CD8-positive, alpha-beta memory T cell (primary cell): ENCODE measurements at regions of chr12 and their contacts with region 1.

Region 1: DNA sequence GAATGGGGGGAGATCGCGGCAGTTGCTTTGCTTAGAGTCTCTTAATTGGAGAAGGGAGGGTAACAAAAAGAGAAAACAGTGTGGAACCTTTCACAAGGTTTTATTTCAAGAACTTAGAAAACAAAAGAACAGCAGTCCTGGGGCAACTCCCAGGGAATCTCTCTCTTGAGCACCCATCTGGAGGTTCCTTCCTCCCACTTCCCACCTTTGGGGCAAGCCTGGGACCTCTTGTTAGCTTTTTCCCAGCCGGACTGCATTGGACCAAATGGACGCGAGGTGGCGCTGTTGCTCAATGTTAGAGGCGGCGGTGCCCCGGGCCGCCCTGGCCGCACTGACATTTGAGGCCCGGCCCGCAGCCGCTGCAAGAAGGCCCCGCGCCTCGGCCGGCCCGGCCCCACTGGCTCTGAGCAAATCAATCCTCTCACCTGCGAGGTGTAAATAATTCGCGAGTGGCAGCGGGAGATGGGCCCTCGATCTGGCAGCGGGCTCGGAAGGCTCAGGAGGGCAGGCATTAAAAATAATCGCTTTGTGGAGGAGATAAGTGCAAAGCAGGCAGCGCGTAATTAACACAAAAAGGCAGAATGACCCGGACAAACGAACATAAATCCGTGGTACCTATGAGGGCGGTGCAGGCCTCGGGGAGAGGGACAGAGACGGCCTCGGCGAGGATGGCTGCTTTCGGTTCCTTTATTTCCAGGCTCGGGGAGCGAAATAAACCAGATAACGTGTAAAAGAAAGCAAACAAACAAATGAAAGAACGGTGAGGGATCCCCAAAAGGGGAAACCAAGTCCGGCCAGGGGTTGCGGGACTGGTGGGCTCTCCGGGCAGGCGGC is 2.7 kb upstream of the HOXC8 start:
- DNase-seq: peak; percentile 75 to 87 (median 82)
- H3K4me3 ChIP-seq: peak overlapping the region; percentile 51
- H3K4me3 Mint-ChIP-seq: peak overlapping the region; percentile 66 to 93 (median 77)
- H3K27ac ChIP-seq: no peak overlapping the region
- H3K27ac Mint-ChIP-seq: peak overlapping the region in 5 of 8 donors; percentile 14 to 73 (median 68)
- H3K4me1 ChIP-seq: peaks cover 19% of the 10 kb centered on the region
- H3K4me1 Mint-ChIP-seq: peaks cover 20 to 46% (median 20%) of the 10 kb centered on the region in 3 donors
- H3K27me3 ChIP-seq: peaks cover 83% of the 10 kb centered on the region
- H3K27me3 Mint-ChIP-seq: peaks cover 78 to 99% of the 10 kb centered on the region in 2 donors

Region 2: GRCh38 chr12:53928054-53928835 is 77.8 kb before region 1 on chr12:
- CTCF ChIA-PET with region 1: no interaction called
- POLR2A ChIA-PET with region 1: no interaction called
- DNase-seq: no peak
- H3K4me3 ChIP-seq: no peak overlapping the region
- H3K4me3 Mint-ChIP-seq: no peak overlapping the region
- H3K27ac ChIP-seq: no peak overlapping the region
- H3K27ac Mint-ChIP-seq: no peak overlapping the region
- H3K4me1 ChIP-seq: no peaks in the 10 kb centered on the region
- H3K4me1 Mint-ChIP-seq: no peaks in the 10 kb centered on the region
- H3K27me3 ChIP-seq: peaks cover 77% of the 10 kb centered on the region
- H3K27me3 Mint-ChIP-seq: peaks cover 84 to 92% of the 10 kb centered on the region in 2 donors

Region 3: GRCh38 chr12:54017878-54018467 is 11.9 kb after region 1 on chr12:
- CTCF ChIA-PET with region 1: interaction called, 24 read pairs
- POLR2A ChIA-PET with region 1: interaction called, 5 read pairs
- DNase-seq: peak; percentile 62 to 88 (median 73)
- H3K4me3 ChIP-seq: peak overlapping the region; percentile 86
- H3K4me3 Mint-ChIP-seq: peak overlapping the region; percentile 86 to 95 (median 91)
- H3K27ac ChIP-seq: peak overlapping the region; percentile 72
- H3K27ac Mint-ChIP-seq: peak overlapping the region in 7 of 8 donors; percentile 26 to 96 (median 70)
- H3K4me1 ChIP-seq: peaks cover 11% of the 10 kb centered on the region
- H3K4me1 Mint-ChIP-seq: peaks cover 15 to 34% (median 18%) of the 10 kb centered on the region in 3 donors
- H3K27me3 ChIP-seq: peaks cover 60% of the 10 kb centered on the region
- H3K27me3 Mint-ChIP-seq: peaks cover 63 to 76% of the 10 kb centered on the region in 2 donors

Region 4: DNA sequence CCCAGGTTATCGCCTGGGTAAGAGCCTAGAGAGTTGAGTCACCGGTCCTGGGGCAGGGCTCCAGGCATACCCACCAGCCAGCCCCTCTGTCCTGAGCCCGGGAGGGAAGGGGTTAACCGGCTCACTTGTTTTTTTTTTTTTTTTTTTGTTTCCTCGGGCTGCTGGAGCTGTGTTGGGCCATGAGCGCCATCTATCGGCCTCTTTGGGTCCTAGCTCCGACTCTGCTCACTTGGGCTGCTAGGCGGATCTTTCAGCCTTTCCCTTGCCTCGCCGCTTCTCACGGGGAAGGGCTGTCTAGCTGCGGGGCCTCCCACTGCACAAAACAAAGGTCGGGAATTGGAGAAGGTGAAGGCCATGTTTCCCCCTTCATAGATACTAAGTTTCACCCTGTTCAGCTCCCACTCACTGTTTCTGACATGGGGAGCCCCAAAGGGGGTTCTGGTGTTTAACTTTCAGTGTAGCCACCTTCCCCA is 185.5 kb after region 1 on chr12:
- CTCF ChIA-PET with region 1: interaction called, 95 read pairs
- POLR2A ChIA-PET with region 1: interaction called, 3 read pairs
- DNase-seq: peak; percentile 66 to 83 (median 74)
- H3K4me3 ChIP-seq: no peak overlapping the region
- H3K4me3 Mint-ChIP-seq: peak overlapping the region in 1 of 7 donors; percentile 72
- H3K27ac ChIP-seq: no peak overlapping the region
- H3K27ac Mint-ChIP-seq: peak overlapping the region in 2 of 8 donors; percentile 29 to 78
- H3K4me1 ChIP-seq: peaks cover 17% of the 10 kb centered on the region
- H3K4me1 Mint-ChIP-seq: peaks cover 23 to 34% (median 31%) of the 10 kb centered on the region in 3 donors
- H3K27me3 ChIP-seq: peaks cover 20% of the 10 kb centered on the region
- H3K27me3 Mint-ChIP-seq: peaks cover 36 to 50% of the 10 kb centered on the region in 2 donors

Region 5: DNA sequence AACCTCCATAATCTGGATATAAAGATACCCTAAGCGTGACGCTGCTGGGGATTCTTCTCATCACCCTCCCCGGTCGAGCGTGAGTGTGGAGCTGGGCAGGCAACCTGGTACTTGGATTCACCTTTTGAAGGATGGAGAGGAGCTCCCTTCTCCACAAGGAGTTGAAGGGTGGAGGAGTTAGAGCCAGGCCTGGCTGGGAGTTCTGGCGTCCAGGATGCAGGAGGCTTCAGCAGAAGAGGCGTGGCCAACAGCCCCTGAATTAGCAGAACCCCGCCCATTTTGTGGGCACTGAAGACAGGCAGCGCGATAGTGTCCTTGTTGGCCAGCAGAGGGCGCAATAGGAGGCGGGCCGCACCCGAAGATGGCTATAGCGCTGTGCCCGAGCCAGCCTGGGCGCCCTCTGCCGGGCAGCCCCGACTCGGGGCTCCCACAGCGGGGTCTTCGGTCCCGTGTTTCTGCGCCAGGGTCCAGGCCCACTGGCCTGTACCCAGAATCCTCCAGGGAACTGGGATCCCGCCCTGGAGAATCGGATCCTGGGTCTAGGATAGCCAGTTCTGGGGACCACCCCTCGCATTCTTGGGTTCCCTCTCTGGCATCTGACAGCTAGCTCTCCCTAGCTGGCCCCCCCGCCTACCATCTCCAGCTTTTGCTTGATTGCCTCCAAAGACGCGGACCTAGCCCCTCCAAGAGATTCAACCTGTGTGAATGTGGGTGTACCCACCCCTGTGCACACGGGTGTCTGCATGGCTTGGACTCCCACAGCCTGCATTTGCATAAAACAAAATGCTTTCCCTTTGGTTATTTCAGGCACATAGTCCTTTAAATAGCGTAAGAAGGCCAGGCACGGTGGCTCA is 208.7 kb after region 1 on chr12:
- CTCF ChIA-PET with region 1: interaction called, 216 read pairs
- POLR2A ChIA-PET with region 1: no interaction called
- DNase-seq: peak; percentile 88 to 91 (median 89)
- H3K4me3 ChIP-seq: peak overlapping the region; percentile 56
- H3K4me3 Mint-ChIP-seq: peak overlapping the region; percentile 75 to 91 (median 78)
- H3K27ac ChIP-seq: no peak overlapping the region
- H3K27ac Mint-ChIP-seq: peak overlapping the region in 2 of 8 donors; percentile 74 to 75
- H3K4me1 ChIP-seq: peaks cover 33% of the 10 kb centered on the region
- H3K4me1 Mint-ChIP-seq: peaks cover 25 to 38% (median 30%) of the 10 kb centered on the region in 3 donors
- H3K27me3 ChIP-seq: no peaks in the 10 kb centered on the region
- H3K27me3 Mint-ChIP-seq: peaks cover 11 to 37% of the 10 kb centered on the region in 2 donors